Upper lobe of right lung (tissue), 1 donor: ENCODE measurements at regions of chr6 and their contacts with region 1.

Region 1: GRCh38 chr6:52826513-52826912 is 14.1 kb downstream of the GSTA5 start:
- DNase-seq: no peak
- ATAC-seq: no peak
- H3K4me3 ChIP-seq: no peak overlapping the region
- H3K27ac ChIP-seq: no peak overlapping the region
- H3K4me1 ChIP-seq: no peaks in the 10 kb centered on the region
- H3K27me3 ChIP-seq: no peaks in the 10 kb centered on the region
- CTCF ChIP-seq: no peak

Region 2: DNA sequence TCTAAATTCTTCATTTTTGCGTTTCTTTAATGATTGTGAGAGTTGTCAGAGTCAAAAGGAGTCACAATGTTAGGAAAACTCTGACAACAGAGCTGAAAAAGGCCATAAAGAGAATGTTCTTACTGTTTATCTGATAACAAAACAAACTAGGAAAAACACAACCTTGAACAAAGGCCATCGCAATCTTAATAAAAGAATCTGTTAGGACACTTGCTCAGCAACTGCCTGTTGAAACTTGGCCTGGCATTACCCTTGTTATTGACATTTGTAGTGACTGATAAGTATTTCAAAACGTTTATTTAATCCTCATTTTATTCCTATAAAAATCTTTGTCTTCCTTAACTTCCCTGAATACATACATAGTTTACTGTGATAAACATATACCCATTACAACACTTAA is 38.6 kb before region 1 on chr6:
- intact Hi-C with region 1: loop called (anchors 2 kb)
- DNase-seq: no peak
- ATAC-seq: no peak
- H3K4me3 ChIP-seq: no peak overlapping the region
- H3K27ac ChIP-seq: no peak overlapping the region
- H3K4me1 ChIP-seq: no peaks in the 10 kb centered on the region
- H3K27me3 ChIP-seq: no peaks in the 10 kb centered on the region
- CTCF ChIP-seq: no peak